ENCODE measurements at regions of chr19 and their contacts with region 1.

Region 1: DNA sequence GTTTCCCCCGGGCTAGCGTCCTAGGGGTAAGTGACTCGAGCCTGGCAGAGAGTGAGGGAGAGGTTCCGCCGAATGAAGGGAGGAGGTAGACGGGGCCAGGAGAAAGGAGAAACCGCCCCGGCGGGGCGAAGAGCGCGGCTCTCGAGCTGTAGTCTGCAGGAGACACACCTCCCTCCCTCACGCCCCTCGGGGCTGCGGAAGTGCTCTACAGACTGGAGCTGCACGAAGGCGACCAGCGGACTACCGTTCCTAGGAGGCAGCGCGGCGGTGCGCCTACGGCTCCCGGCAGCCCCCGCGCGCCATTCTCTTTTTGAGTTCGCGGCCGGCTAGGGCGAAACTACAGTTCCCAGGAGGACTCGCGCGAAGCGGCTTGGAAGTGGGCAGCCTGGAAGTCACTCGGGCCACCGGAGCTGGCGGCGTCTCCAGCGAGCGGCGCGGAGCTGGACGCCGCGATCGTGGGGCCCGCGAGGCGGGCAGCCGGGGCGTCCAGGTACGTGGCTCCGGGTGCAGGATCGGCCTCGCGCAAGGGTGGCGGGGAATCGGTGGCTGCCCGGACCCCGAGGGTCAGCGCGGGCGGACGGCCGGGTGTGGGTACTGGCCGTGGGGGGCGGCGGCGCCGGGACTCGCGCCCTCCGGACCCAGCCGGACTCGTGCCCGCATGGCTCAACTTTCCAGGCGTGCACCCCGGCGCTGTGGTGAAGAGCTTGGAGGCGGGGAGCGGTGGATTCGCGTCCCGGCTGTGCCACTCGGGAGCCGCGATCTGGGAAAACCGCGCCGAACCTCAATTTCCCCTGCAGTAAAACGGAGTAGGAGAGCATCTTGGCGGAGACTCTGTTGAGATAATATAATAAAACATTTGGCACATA is at the start of gene SIPA1L3:
- DNase-seq: peak; percentile 94
- ATAC-seq: peak; percentile 96
- H3K4me3 ChIP-seq: peak within 1 kb of the TSS; percentile 84
- H3K27ac ChIP-seq: peak within 1 kb of the TSS; percentile 69
- H3K4me1 ChIP-seq: peaks cover 5% of the 10 kb centered on the region; the same call in 1 of the 2 replicates
- H3K27me3 ChIP-seq: no peaks in the 10 kb centered on the region
- CTCF ChIP-seq: 0 out of 2 replicates have a peak, but pooled peaks have one; percentile 5
- POLR2A ChIP-seq: peak; percentile 91
- RAD21 ChIP-seq: 0 out of 2 replicates have a peak, but pooled peaks have one; percentile 19
- total RNA-seq, gene SIPA1L3: 4.1 and 8.3 TPM in 2 replicates

Region 2: GRCh38 chr19:37931881-37932655 is 25.0 kb after region 1 on chr19:
- CTCF ChIA-PET with region 1: interaction called, 3 read pairs
- POLR2A ChIA-PET with region 1: no interaction called
- dilution Hi-C with region 1: no loop called
- in situ Hi-C with region 1: no loop called
- intact Hi-C with region 1: loop called (anchors 2 kb)
- DNase-seq: peak; percentile 78
- ATAC-seq: peak; percentile 84
- H3K4me3 ChIP-seq: no peak overlapping the region
- H3K27ac ChIP-seq: peak overlapping the region; percentile 50
- H3K4me1 ChIP-seq: peaks cover 11% of the 10 kb centered on the region
- H3K27me3 ChIP-seq: no peaks in the 10 kb centered on the region
- CTCF ChIP-seq: 0 out of 2 replicates have a peak, but pooled peaks have one; percentile 9
- POLR2A ChIP-seq: no peak; the same call in 1 of the 2 replicates
- RAD21 ChIP-seq: no peak; the same call in 1 of the 2 replicates

Region 3: DNA sequence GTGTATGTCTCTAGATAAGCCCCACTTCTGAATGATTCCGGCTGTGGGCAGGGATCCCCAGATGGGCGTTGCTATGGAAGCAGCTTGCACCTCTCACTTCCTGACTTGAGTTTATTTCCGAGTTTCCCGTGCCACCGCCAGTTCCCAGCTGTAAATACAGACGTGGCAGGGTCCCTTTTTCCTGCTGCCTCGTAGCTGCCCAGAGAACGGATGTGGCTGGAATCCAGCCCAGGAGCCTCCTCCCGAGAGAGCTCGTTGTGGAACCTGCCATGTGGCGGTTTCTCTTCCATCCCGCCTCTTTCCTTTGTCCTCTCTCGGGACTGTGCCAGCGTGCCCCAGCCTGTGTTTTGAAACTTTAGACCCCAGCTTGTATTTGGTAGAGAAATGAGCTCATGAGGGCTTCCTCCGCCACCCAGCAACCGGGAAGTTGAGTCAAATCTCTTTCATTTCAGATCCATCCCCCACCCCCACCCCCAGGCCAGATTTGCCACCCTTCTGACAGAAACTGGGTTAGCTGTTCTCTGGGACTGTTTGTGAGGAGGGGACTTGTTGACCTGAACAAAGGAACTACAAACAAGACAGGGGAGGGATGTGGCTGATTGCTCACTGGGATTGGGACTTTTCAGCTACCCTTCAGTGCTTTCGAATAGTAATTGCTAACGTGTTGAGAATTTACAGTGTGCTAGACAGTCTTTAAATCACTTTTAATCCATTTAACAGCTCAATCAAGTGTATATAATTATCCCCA is 96.5 kb after region 1 on chr19:
- CTCF ChIA-PET with region 1: interaction called, 7 read pairs
- POLR2A ChIA-PET with region 1: interaction called, 7 read pairs
- dilution Hi-C with region 1: no loop called
- in situ Hi-C with region 1: no loop called
- intact Hi-C with region 1: loop called (anchors 1 kb)
- DNase-seq: peak; percentile 92
- ATAC-seq: peak; percentile 24
- H3K4me3 ChIP-seq: peak overlapping the region; percentile 26
- H3K27ac ChIP-seq: peak overlapping the region; percentile 79
- H3K4me1 ChIP-seq: peaks cover 23% of the 10 kb centered on the region
- H3K27me3 ChIP-seq: no peaks in the 10 kb centered on the region
- CTCF ChIP-seq: no peak
- POLR2A ChIP-seq: peak; percentile 78
- RAD21 ChIP-seq: peak; percentile 23; the same call in 1 of the 2 replicates

Region 4: GRCh38 chr19:38224014-38224862 is 317.1 kb after region 1 on chr19 and contains the start of gene DPF1:
- CTCF ChIA-PET with region 1: no interaction called
- POLR2A ChIA-PET with region 1: no interaction called
- dilution Hi-C with region 1: no loop called
- in situ Hi-C with region 1: no loop called
- intact Hi-C with region 1: loop called (anchors 2 kb)
- DNase-seq: peak; percentile 56
- ATAC-seq: peak; percentile 98
- H3K4me3 ChIP-seq: peak within 1 kb of the TSS; percentile 54
- H3K27ac ChIP-seq: no peak within 1 kb of the TSS; the same call in 1 of the 2 replicates
- H3K4me1 ChIP-seq: peaks cover 3% of the 10 kb centered on the region; the same call in 1 of the 2 replicates
- H3K27me3 ChIP-seq: no peaks in the 10 kb centered on the region
- CTCF ChIP-seq: 0 out of 2 replicates have a peak, but pooled peaks have one; percentile 7
- POLR2A ChIP-seq: no peak
- RAD21 ChIP-seq: no peak
- total RNA-seq, gene DPF1: 3.2 and 4.2 TPM in 2 replicates

Region 5: DNA sequence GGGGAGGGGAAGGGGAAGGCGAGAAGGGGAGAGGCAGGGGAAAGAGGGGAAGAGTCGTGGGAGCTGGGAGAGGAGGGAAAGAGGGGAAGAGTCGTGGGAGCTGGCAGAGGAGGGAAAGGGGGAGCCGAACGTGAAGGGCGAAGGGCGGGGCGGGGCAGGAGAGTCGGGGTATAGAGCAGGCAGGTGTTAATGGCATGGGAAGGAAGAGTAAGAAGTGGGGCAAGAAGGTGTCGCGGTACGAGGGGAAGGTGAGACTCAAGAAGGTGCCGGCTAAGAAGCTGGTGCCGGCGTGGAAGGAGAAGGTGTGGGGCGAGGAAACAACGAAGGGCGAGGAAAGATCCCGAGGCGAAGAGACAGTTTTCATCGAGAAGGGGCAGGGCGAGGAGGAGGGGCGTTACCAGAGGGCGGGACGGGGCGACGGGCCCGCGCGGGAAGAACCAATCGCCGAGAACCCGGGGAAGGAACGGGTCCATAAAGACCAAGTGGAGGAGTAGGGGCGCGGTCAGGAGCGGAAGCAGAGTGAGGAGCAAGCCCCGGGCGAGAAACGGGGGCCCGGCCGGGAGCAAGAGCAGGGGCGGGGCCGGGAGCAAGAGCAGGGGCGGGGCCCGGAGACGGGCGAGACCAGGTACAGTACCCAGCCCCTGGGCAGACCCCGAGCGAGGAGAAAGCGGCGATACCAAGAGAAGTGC is 429.0 kb after region 1 on chr19:
- CTCF ChIA-PET with region 1: no interaction called
- POLR2A ChIA-PET with region 1: no interaction called
- dilution Hi-C with region 1: no loop called
- in situ Hi-C with region 1: no loop called
- intact Hi-C with region 1: loop called (anchors 2 kb)
- DNase-seq: peak; percentile 92
- ATAC-seq: peak; percentile 88
- H3K4me3 ChIP-seq: peak overlapping the region; percentile 77
- H3K27ac ChIP-seq: peak overlapping the region; percentile 55
- H3K4me1 ChIP-seq: no peaks in the 10 kb centered on the region
- H3K27me3 ChIP-seq: no peaks in the 10 kb centered on the region
- CTCF ChIP-seq: no peak
- POLR2A ChIP-seq: no peak; the same call in 1 of the 2 replicates
- RAD21 ChIP-seq: no peak